AG04449 (cell line): ENCODE measurements at regions of chr11 and their contacts with region 1.

Region 1: DNA sequence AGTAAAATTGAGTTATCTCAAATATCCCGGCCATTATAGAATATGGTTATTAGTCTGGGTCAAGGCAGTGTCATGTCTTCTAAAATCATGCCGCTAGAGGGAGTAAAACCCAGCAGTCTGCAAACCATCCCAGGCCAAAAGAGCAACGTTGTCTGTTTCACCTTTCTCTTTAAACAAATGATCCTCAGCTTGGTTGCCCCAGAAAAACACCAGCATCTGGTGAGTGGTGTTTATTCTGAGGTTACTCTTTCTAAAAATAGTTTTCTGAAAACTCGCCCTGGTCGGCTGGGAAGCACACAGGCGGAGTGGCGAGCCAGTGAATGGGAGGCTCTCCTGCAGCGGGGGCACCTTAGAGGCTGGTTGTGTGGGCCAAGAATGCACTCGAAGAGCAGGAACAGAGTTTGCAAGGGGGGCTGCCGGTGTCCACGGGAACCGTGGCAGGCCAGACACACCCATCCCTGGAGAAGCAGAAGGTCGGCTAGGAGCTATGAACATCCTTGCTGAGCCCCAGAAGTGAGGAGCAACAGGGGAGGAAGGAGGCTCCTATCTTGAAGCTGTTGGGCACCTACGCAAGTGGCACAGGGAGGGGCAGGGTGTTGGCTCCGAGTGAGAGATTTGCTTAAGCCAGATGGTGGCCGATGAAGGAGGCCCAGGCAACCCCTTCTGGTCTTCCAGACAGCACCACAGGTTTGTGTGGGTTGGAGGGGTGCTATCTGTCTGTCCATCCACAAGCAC is 297.1 kb downstream of the ETS1 start:
- DNase-seq: peak; percentile 69
- H3K4me3 ChIP-seq: no peak overlapping the region; the same call in 1 of the 2 replicates
- CTCF ChIP-seq: peak; percentile 65

Region 2: DNA sequence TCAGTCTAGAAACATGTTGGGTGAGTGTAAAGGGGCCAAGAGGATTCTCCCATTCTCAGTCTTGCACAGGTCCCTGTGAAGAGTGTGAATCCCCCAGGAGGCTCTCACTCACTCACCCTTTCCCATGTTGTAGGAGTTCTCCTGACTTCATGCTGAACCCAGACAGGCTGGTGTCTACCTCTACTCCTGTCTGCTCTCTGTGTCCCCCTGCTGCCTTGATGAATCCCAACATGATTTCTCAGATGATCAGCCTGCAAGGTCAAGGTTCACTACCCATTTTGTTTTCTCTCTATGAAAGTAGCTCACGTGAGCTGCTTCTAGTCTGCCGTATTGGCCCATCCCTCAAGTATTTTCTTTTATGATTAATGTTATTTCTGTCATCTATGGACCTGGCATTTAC is 203.5 kb before region 1 on chr11:
- CTCF ChIA-PET with region 1: no interaction called
- POLR2A ChIA-PET with region 1: no interaction called
- DNase-seq: no peak
- H3K4me3 ChIP-seq: no peak overlapping the region
- CTCF ChIP-seq: no peak

Region 3: GRCh38 chr11:128279866-128280265 is 10.4 kb before region 1 on chr11:
- CTCF ChIA-PET with region 1: interaction called, 36 read pairs
- POLR2A ChIA-PET with region 1: no interaction called
- DNase-seq: peak; percentile 34
- H3K4me3 ChIP-seq: no peak overlapping the region
- CTCF ChIP-seq: no peak

Region 4: GRCh38 chr11:128488471-128488870 is 198.2 kb after region 1 on chr11:
- CTCF ChIA-PET with region 1: interaction called, 13 read pairs
- POLR2A ChIA-PET with region 1: no interaction called
- DNase-seq: no peak
- H3K4me3 ChIP-seq: no peak overlapping the region
- CTCF ChIP-seq: no peak